Naive thymus-derived CD4-positive, alpha-beta T cell (primary cell): ENCODE measurements at regions of chr10 and their contacts with region 1.

Region 1: DNA sequence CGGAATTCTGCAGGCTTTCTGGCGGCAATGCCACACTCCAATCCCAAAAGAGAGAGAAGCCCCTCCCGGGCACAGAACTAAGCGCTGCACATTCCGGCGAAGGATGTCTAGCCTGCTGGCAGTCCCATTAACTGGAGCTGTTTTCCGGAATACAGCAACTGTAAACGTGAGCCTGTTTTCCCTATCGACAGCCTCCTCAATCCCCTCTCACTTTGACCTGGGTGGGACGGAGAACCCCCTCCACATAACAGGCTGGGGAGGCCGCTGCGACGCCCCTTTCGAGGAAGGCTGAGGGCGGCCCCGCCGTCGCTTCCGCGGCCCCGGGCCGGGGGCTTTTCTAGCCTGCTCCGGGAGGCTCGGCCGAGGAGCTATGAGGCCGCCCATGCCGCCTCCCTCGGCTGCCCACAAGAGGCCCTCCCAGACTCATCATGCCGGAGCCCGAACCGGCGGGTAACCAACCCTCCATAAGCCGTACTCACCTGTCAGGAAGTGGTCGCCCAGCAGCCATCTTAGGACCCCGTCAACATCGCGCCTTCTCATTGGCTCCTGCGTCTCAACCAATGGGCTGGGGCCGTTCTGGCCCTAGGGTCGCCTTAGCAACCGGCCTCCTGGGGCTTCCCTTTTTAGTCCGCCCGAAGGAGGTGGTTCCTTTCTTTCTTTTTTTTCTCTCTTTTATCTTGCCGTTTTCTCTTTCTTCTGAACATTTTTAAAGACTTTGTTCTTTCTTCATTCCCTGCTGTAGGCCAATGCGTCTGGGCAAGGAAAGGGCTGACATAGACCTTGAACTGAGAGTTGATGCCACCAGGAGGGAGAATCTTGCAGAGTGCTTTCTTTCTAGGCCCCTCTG is at the start of gene FAM204A:
- DNase-seq: peak; percentile 92 to 99 (median 97)
- ATAC-seq: peak; percentile 99
- H3K4me3 ChIP-seq: peak within 1 kb of the TSS; percentile 69
- H3K4me3 Mint-ChIP-seq: peak within 1 kb of the TSS; percentile 88 to 98 (median 96)
- H3K27ac ChIP-seq: peak within 1 kb of the TSS; percentile 78
- H3K27ac Mint-ChIP-seq: peak within 1 kb of the TSS; percentile 84 to 98 (median 95)
- H3K4me1 ChIP-seq: peaks cover 22% of the 10 kb centered on the region in 2 donors
- H3K4me1 Mint-ChIP-seq: peaks cover 20 to 69% (median 59%) of the 10 kb centered on the region in 7 donors
- H3K27me3 ChIP-seq: no peaks in the 10 kb centered on the region
- H3K27me3 Mint-ChIP-seq: peaks cover 0 to 2% (median 0%) of the 10 kb centered on the region in 5 donors
- total RNA-seq, gene FAM204A: 56.6 to 69.6 (median 63.0) TPM

Region 2: DNA sequence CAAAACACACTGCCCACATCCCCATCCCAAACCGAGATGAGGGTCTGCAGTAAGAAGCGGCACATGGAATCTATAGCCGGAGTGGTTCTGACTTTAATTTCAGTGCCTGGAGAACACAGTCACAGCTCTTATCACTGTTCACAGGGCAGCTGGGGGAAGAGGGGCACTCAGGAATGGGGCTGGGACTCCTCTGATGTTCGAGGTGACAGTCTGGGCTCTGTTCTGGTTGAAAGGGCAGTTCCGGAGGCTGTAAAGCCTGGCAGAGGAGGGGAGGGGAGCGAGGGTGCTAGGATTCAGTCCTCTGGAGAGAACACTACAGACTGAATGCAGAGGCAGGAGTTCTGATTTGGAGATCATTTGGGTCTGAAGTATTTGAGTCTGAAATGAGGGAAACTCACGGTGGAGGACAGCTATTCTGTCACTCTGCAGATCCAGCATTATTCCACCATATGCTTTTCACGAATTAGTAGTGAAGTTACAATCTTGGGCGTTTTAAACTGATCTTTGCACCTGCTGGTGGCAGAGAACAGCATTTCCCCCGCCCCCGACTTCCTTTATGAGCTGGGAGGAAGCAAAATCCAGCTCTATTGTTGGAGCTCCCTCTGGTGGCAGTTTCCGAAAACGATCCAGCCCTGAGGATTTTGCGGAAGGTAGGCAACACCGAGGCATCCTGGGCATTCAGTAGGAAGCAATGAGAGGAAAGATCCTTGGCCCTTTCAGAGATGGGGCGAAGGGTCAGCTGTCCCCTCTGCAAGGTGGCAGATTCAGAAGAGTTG is 1167.4 kb before region 1 on chr10:
- CTCF ChIA-PET with region 1: no interaction called
- POLR2A ChIA-PET with region 1: no interaction called
- intact Hi-C with region 1: loop called in 1 of 2 experiments (anchors 1 kb)
- DNase-seq: peak; percentile 64 to 87 (median 82)
- ATAC-seq: peak; percentile 90
- H3K4me3 ChIP-seq: peak overlapping the region; percentile 57
- H3K4me3 Mint-ChIP-seq: peak overlapping the region; percentile 85 to 94 (median 90)
- H3K27ac ChIP-seq: no peak overlapping the region
- H3K27ac Mint-ChIP-seq: peak overlapping the region in 8 of 9 donors; percentile 20 to 66 (median 51)
- H3K4me1 ChIP-seq: peaks cover 7 to 10% of the 10 kb centered on the region in 2 donors
- H3K4me1 Mint-ChIP-seq: peaks cover under 1 to 18% (median 14%) of the 10 kb centered on the region in 7 donors
- H3K27me3 ChIP-seq: no peaks in the 10 kb centered on the region
- H3K27me3 Mint-ChIP-seq: peaks cover 28 to 47% (median 29%) of the 10 kb centered on the region in 5 donors

Region 3: DNA sequence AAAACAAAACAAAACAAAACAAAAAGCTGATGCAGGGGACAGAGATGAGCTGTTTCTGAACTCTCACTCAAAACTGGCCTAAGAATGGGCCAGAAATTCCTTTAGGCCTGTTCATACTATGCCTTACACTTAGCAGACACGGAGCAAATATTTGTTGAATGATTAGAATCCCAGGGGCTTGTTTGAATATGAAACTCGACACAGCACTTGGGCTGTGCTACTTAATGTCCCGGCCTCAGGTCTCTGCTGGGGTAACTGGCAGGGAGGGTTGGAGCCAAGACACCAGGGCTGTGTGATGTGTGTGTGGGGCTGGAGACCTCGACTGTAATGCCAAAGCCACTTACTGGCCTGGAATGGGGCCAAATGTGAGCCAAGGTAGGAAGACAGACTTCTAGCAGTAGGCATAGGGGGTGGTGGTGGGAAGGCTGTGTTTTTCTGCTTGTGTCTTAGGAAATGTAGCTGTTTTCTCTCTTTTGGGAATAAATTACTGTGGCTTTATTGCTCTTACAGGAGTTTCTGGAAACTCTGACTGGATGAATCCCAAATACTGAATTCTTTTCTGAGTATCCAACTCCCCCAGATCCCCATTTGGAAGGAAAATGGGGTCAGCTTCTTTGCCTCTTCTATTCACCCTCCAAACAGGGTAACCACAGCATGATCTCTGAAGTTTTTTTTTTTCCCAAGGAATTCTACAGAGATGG is 732.8 kb before region 1 on chr10:
- CTCF ChIA-PET with region 1: no interaction called
- POLR2A ChIA-PET with region 1: no interaction called
- intact Hi-C with region 1: no loop called
- DNase-seq: no peak
- ATAC-seq: no peak
- H3K4me3 ChIP-seq: no peak overlapping the region
- H3K4me3 Mint-ChIP-seq: no peak overlapping the region
- H3K27ac ChIP-seq: no peak overlapping the region
- H3K27ac Mint-ChIP-seq: no peak overlapping the region
- H3K4me1 ChIP-seq: no peaks in the 10 kb centered on the region
- H3K4me1 Mint-ChIP-seq: no peaks in the 10 kb centered on the region
- H3K27me3 ChIP-seq: no peaks in the 10 kb centered on the region
- H3K27me3 Mint-ChIP-seq: peaks cover 2 to 28% (median 18%) of the 10 kb centered on the region in 5 donors

Region 4: DNA sequence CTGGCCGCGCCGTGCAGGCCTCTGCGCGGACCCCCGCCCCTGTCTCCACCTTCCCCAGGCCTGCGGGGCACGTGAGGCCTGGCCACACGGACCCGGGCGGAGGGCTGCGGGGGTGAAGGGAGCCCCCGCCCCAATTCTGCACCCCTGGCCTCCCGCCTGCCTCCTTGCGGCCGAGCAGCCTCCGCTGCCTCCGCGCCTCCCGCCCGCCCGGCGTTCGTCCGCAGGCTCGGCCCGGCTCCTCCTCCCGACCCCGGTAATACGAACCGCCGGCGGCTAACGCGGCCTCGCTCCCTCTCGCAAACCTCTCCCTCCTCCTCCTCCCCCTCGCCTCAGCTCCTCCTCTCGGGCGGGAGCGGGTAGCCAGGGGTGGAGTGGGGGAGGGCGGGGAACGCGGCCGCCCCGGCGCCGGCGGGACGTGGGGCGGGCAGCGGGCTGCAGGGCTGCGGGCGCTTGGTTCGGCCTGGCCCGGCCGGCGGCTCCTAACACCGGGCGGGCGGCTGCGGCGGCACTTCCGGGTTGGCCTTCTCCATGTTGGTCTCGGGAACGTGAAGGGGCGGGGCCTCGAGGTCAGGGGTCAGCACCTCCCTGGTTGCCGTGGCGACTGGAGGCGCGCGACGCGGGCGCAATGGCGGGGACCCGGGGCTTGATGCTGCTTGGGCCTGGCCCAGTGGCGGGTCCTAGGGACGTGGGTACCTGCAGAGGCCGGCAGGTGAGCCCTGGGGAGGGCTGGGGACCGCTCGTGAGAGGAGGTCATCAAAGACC is 295.4 kb before region 1 on chr10 and contains the start of gene RAB11FIP2:
- CTCF ChIA-PET with region 1: no interaction called
- POLR2A ChIA-PET with region 1: no interaction called
- intact Hi-C with region 1: loop called (anchors 1 to 2 kb)
- DNase-seq: peak; percentile 92 to 98 (median 95)
- ATAC-seq: peak; percentile 97
- H3K4me3 ChIP-seq: peak within 1 kb of the TSS; percentile 81
- H3K4me3 Mint-ChIP-seq: peak within 1 kb of the TSS; percentile 84 to 95 (median 88)
- H3K27ac ChIP-seq: peak within 1 kb of the TSS; percentile 83
- H3K27ac Mint-ChIP-seq: peak within 1 kb of the TSS; percentile 77 to 94 (median 85)
- H3K4me1 ChIP-seq: peaks cover 18 to 19% of the 10 kb centered on the region in 2 donors
- H3K4me1 Mint-ChIP-seq: peaks cover 17 to 54% (median 49%) of the 10 kb centered on the region in 7 donors
- H3K27me3 ChIP-seq: no peaks in the 10 kb centered on the region
- H3K27me3 Mint-ChIP-seq: peaks cover 0 to 20% (median 0%) of the 10 kb centered on the region in 5 donors
- total RNA-seq, gene RAB11FIP2: 17.5 to 32.6 (median 21.6) TPM

Region 5: GRCh38 chr10:118459726-118460193 is 117.7 kb after region 1 on chr10:
- CTCF ChIA-PET with region 1: no interaction called
- POLR2A ChIA-PET with region 1: no interaction called
- intact Hi-C with region 1: loop called in 1 of 2 experiments (anchors 1 kb)
- DNase-seq: peak in 7 of 9 donors; percentile 14 to 46 (median 37)
- ATAC-seq: peak; percentile 65
- H3K4me3 ChIP-seq: peak overlapping the region; percentile 45
- H3K4me3 Mint-ChIP-seq: peak overlapping the region; percentile 46 to 78 (median 62)
- H3K27ac ChIP-seq: no peak overlapping the region
- H3K27ac Mint-ChIP-seq: no peak overlapping the region
- H3K4me1 ChIP-seq: no peaks in the 10 kb centered on the region
- H3K4me1 Mint-ChIP-seq: peaks cover 0 to 9% (median 8%) of the 10 kb centered on the region in 7 donors
- H3K27me3 ChIP-seq: no peaks in the 10 kb centered on the region
- H3K27me3 Mint-ChIP-seq: peaks cover 37 to 65% (median 42%) of the 10 kb centered on the region in 5 donors

Region 6: DNA sequence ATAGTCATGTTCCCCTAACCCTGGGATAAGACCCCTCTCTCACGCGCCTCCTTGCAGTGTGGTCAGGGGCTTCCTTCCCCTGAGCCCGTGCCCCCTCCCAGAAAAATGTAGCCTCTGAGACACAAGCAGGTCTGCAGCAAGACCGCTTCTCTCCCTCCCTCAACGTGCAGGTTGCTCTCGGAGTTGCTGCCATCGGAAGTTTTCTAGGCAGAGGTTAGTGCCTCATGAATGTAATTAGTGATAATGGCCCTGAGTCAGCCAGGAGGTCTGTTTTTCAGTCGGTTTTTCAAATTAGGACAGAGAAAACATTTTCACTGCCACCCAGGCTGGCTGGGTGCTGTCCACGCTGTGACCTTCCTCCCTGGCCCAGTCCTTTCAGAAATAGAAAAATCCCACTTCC is 296.7 kb after region 1 on chr10:
- CTCF ChIA-PET with region 1: no interaction called
- POLR2A ChIA-PET with region 1: no interaction called
- intact Hi-C with region 1: no loop called
- DNase-seq: no peak
- ATAC-seq: no peak
- H3K4me3 ChIP-seq: no peak overlapping the region
- H3K4me3 Mint-ChIP-seq: no peak overlapping the region
- H3K27ac ChIP-seq: no peak overlapping the region
- H3K27ac Mint-ChIP-seq: no peak overlapping the region
- H3K4me1 ChIP-seq: no peaks in the 10 kb centered on the region
- H3K4me1 Mint-ChIP-seq: peaks cover 0 to 15% (median 4%) of the 10 kb centered on the region in 7 donors
- H3K27me3 ChIP-seq: no peaks in the 10 kb centered on the region
- H3K27me3 Mint-ChIP-seq: peaks cover 0 to 5% (median 0%) of the 10 kb centered on the region in 5 donors

Region 7: GRCh38 chr10:118698421-118698820 is 356.4 kb after region 1 on chr10:
- CTCF ChIA-PET with region 1: no interaction called
- POLR2A ChIA-PET with region 1: no interaction called
- intact Hi-C with region 1: loop called in 1 of 2 experiments (anchors 1 kb)
- DNase-seq: peak; percentile 35 to 92 (median 88)
- ATAC-seq: peak; percentile 100
- H3K4me3 ChIP-seq: peak overlapping the region; percentile 18
- H3K4me3 Mint-ChIP-seq: peak overlapping the region; percentile 71 to 93 (median 83)
- H3K27ac ChIP-seq: peak overlapping the region; percentile 57
- H3K27ac Mint-ChIP-seq: peak overlapping the region; percentile 73 to 95 (median 90)
- H3K4me1 ChIP-seq: peaks cover 15 to 40% of the 10 kb centered on the region in 2 donors
- H3K4me1 Mint-ChIP-seq: peaks cover 29 to 89% (median 74%) of the 10 kb centered on the region in 7 donors
- H3K27me3 ChIP-seq: no peaks in the 10 kb centered on the region
- H3K27me3 Mint-ChIP-seq: no peaks in the 10 kb centered on the region

Region 8: DNA sequence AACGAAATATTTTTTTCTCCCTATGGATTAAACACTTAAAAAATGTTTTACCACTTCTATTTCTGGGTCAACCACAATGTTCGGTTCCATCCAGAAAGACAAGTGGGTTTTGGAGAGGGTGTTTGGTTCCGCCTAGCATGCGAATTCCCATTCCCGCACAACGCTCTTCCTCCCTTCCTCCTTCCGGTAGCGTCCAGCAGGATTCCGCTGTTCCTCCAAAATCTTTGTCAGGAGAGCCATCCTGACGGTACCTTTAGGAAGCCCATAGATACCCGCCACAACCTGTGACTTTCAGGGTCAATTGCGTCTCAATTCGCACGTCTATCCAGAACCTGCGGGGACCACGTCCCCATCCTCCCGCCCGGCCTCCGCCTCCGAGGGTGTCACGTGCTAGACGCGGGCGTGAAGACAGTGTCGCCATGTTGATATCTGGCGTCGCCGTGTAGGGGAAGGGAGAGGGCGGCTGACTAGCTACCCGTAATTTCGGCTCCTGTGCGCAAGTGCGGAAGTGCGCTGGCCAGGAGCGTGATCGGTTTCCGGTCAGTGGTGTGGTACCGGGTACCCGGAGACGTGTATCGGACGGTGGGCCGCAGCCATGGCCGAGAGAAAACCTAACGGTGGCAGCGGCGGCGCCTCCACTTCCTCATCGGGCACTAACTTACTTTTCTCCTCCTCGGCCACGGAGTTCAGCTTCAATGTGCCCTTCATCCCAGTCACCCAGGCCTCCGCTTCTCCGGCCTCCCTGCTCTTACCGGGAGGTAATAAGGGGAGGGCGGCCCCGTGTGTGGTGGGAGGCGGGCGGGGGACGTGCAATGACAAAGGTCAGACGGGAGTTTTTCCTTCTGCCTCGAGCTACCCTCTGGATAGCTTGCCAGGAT is 1550.4 kb after region 1 on chr10 and contains the start of gene SEC23IP:
- CTCF ChIA-PET with region 1: no interaction called
- POLR2A ChIA-PET with region 1: no interaction called
- intact Hi-C with region 1: loop called in 1 of 2 experiments (anchors 5 kb)
- DNase-seq: peak; percentile 77 to 94 (median 83)
- ATAC-seq: peak; percentile 99
- H3K4me3 ChIP-seq: peak within 1 kb of the TSS; percentile 95
- H3K4me3 Mint-ChIP-seq: peak within 1 kb of the TSS; percentile 92 to 100 (median 98)
- H3K27ac ChIP-seq: peak within 1 kb of the TSS; percentile 89
- H3K27ac Mint-ChIP-seq: peak within 1 kb of the TSS; percentile 95 to 99 (median 98)
- H3K4me1 ChIP-seq: peaks cover 12 to 21% of the 10 kb centered on the region in 2 donors
- H3K4me1 Mint-ChIP-seq: peaks cover 40 to 53% (median 48%) of the 10 kb centered on the region in 7 donors
- H3K27me3 ChIP-seq: no peaks in the 10 kb centered on the region
- H3K27me3 Mint-ChIP-seq: peaks cover 0 to 4% (median 0%) of the 10 kb centered on the region in 5 donors
- total RNA-seq, gene SEC23IP: 34.8 to 68.3 (median 54.4) TPM